ENCODE measurements at regions of chr12 and their contacts with region 1.

Region 1: GRCh38 chr12:66169221-66170170 is at the start of gene TMBIM4:
- DNase-seq: peak; percentile 89
- H3K4me3 Mint-ChIP-seq: peak within 1 kb of the TSS; percentile 89
- H3K27ac Mint-ChIP-seq: peak within 1 kb of the TSS; percentile 99
- H3K4me1 Mint-ChIP-seq: peaks cover 46% of the 10 kb centered on the region
- H3K27me3 Mint-ChIP-seq: no peaks in the 10 kb centered on the region
- total RNA-seq, gene TMBIM4: 80.5 to 82.8 TPM

Region 2: DNA sequence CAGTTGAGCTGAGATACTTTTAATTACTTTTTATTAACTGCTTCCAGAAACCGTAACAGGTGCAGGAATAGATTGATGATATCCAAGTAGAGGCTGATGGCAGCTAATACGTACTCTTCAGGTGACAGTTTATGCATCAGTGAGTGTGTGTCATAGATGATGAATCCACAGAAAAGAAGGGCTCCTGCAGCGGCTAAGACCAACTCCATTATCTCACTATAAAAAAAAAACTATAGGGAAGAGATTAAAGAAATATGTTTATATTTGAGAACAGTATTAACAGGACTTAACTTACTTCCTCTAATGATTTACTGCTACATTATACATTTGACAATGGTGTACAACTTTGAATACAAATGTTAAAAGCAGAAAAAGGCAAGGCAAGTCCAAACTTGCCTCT is 31.6 kb before region 1 on chr12:
- CTCF ChIA-PET with region 1: interaction called, 3 read pairs
- POLR2A ChIA-PET with region 1: interaction called, 86 read pairs
- DNase-seq: no peak
- H3K4me3 Mint-ChIP-seq: no peak overlapping the region
- H3K27ac Mint-ChIP-seq: no peak overlapping the region
- H3K4me1 Mint-ChIP-seq: peaks cover 5% of the 10 kb centered on the region
- H3K27me3 Mint-ChIP-seq: no peaks in the 10 kb centered on the region

Region 3: DNA sequence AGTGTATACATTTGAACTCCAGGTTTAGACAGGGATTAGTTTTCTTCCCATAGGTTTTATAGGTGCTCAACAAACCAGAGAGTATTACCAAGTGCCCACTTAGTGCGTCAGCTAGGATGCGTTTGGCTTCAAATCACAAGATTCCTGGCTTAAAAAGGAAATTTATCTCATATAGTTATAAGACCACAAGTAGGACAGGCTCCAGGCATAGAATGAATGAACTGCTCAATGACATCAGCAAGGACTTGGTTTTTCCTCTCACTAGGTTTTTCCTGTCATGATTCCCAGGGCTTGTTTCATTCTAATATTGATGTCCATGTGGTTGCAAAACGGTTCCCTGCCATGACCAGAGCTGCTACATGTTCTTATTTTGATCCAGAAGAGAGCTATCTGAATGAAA is 13.5 kb after region 1 on chr12:
- CTCF ChIA-PET with region 1: no interaction called
- POLR2A ChIA-PET with region 1: interaction called, 10 read pairs
- DNase-seq: no peak
- H3K4me3 Mint-ChIP-seq: no peak overlapping the region
- H3K27ac Mint-ChIP-seq: no peak overlapping the region
- H3K4me1 Mint-ChIP-seq: peaks cover 2% of the 10 kb centered on the region
- H3K27me3 Mint-ChIP-seq: peaks cover 37% of the 10 kb centered on the region

Region 4: GRCh38 chr12:66196806-66197205 is 27.3 kb after region 1 on chr12:
- CTCF ChIA-PET with region 1: interaction called, 3 read pairs
- POLR2A ChIA-PET with region 1: interaction called, 11 read pairs
- DNase-seq: no peak
- H3K4me3 Mint-ChIP-seq: no peak overlapping the region
- H3K27ac Mint-ChIP-seq: peak overlapping the region; percentile 33
- H3K4me1 Mint-ChIP-seq: peaks cover 11% of the 10 kb centered on the region
- H3K27me3 Mint-ChIP-seq: peaks cover 13% of the 10 kb centered on the region

Region 5: DNA sequence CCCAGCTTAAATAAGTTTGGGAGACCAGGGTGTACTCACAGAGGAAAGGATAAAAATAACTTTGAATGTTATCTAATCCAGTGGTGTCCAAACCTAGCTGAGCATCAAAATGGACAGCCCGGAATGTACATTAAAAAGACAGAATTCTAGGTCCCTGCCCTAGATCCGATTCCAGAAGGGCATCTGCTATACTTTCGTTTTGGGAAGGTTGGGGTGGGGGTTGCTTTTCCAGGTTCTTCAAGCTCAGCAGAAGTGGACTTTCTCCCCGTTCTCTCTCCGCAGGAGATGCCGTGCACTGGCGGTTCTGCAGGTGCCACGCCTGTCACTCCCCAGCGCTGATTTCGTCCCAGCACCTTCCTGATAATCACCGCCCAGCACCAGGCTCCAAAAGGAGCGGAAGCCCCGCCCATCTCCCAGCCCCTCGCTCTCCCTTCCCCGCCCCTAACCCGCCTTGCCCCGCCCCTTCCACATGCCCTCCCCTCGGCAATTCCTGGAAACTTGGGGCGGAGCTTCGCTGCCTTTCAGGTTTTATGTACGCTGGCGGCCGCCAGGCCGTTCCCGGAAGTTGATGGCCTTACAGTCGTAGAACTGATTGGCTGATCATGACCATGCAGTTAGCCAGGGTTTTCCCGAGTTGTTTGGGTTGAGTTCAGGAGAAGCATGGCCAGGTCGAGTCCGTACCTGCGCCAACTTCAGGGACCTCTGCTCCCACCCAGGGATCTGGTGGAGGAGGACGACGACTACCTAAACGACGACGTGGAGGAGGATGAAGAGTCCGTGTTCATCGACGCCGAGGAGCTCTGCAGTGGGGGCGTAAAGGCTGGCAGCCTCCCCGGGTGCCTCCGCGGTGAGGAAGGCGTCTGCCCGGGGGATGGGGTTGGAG is 132.7 kb after region 1 on chr12 and contains the start of gene HELB:
- CTCF ChIA-PET with region 1: interaction called, 7 read pairs
- POLR2A ChIA-PET with region 1: interaction called, 68 read pairs
- DNase-seq: peak; percentile 98
- H3K4me3 Mint-ChIP-seq: peak within 1 kb of the TSS; percentile 100
- H3K27ac Mint-ChIP-seq: peak within 1 kb of the TSS; percentile 99
- H3K4me1 Mint-ChIP-seq: peaks cover 52% of the 10 kb centered on the region
- H3K27me3 Mint-ChIP-seq: peaks cover 2% of the 10 kb centered on the region
- total RNA-seq, gene HELB: 34.2 to 38.3 TPM